BJ (cell line): ENCODE measurements at regions of chr9 and their contacts with region 1.

Region 1: GRCh38 chr9:121735065-121735789 is 83.8 kb downstream of the DAB2IP start:
- DNase-seq: peak; percentile 41
- H3K4me3 ChIP-seq: no peak overlapping the region
- H3K27me3 ChIP-seq: no peaks in the 10 kb centered on the region
- CTCF ChIP-seq: peak; percentile 87

Region 2: DNA sequence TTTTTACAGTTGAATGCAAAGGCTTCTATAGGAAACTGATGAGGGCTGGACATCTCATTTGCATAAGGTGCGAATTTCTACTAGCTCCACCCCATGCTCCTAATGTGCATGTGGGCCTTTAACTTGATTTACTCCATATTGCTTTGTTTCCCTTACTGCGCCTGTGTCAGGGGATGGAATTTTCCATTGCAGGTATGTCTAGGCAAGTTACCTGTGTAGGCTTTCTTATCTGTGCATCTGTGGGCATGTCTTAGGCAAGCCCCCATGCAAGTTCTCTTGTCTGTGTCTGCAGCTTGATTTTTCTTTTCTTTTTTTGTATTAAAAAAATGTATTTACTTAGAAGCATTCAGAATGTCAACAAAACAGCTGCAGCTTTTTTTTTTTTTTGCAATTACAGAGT is 216.2 kb before region 1 on chr9:
- CTCF ChIA-PET with region 1: no interaction called
- POLR2A ChIA-PET with region 1: no interaction called
- DNase-seq: no peak
- H3K4me3 ChIP-seq: no peak overlapping the region
- H3K27me3 ChIP-seq: peaks cover 10% of the 10 kb centered on the region; the same call in 1 of the 2 replicates
- CTCF ChIP-seq: no peak

Region 3: GRCh38 chr9:121992571-121993212 is 257.5 kb after region 1 on chr9:
- CTCF ChIA-PET with region 1: interaction called, 11 read pairs
- POLR2A ChIA-PET with region 1: no interaction called
- DNase-seq: no peak
- H3K4me3 ChIP-seq: no peak overlapping the region
- H3K27me3 ChIP-seq: no peaks in the 10 kb centered on the region
- CTCF ChIP-seq: peak; percentile 69